Posterior vena cava (tissue), 2 donors: ENCODE measurements at regions of chr18 and their contacts with region 1.

Region 1: DNA sequence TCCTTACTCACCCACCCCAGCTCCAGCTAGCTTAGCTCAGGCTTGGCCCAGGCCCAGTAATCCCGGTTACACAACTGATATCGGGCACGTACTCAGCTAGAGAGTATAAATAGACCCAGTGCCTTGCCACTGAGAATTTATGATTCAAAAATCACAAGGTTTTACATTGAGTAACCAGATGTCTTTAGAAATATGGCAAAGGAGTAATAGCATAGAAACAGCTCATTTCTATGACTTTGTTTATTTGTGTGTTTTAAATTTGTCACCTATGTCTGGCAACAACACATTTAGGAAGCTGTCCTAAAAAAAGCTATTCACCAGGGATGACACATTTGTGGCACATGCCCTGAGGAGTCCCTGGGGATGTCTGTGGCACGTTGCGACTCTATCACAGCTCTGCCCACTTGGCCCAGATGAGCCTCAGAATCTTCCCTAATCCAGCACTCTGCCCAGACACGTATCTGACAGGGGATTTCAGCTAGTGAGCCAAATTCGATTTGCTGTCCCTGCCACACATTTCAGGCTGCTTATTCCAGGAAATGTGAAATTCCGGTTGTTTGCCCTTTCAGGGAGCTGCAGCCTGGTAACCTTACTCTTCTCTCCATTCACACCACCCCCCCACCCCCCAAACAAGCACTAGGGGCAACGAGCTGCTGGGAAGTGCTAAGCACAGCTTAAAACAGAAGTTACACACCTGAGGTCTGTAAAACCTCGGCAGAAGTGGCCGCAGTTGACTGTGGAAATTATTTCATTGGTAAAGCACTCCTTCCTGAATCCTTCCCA is 85.4 kb upstream of the ZCCHC2 start:
- DNase-seq: peak; percentile 97

Region 2: GRCh38 chr18:62384610-62385099 is 52.8 kb before region 1 on chr18:
- intact Hi-C with region 1: no loop called
- DNase-seq: peak; percentile 62

Region 3: GRCh38 chr18:62576845-62577512 is 139.6 kb after region 1 on chr18:
- intact Hi-C with region 1: loop called in 1 of 2 experiments (anchors 5 kb)
- DNase-seq: no peak

Region 4: GRCh38 chr18:62690236-62690815 is 252.9 kb after region 1 on chr18:
- intact Hi-C with region 1: no loop called
- DNase-seq: no peak

Region 5: GRCh38 chr18:62714671-62715435 is 277.4 kb after region 1 on chr18:
- intact Hi-C with region 1: loop called in 1 of 2 experiments (anchors 5 kb)
- DNase-seq: peak; percentile 100

Region 6: DNA sequence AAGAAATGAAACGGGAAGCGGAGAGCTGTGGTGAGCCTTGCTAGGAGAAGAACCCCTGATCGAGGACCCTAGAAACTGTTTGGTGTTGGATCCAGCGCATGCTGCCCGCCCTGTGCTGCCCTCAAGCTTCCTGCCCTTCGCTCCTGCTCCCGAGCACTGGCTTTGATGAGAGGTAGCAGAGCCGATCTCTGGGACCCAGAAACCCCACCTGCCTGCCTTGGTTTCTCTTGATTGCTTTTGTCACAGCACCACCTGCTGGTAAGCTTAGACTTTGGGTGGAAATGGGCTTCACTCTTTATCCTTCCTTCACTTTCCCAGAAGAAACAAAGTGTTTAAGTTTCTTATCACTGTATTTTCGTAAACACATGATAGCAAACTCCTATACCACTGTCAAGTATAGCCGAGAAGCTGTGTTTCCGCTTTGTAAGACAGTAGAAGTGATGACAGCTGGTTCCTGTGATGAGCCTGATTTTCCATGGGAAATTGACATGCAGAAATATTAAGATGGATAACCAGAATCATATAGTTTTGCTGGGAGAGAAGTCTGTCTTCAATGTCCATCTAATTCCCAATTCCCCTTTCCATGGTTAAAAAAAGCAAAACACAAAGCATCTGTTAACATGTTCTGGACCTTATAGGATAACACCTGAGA is 545.3 kb after region 1 on chr18:
- intact Hi-C with region 1: loop called in 1 of 2 experiments (anchors 5 kb)
- DNase-seq: no peak